ENCODE measurements at regions of chr4 and their contacts with region 1.

Region 1: DNA sequence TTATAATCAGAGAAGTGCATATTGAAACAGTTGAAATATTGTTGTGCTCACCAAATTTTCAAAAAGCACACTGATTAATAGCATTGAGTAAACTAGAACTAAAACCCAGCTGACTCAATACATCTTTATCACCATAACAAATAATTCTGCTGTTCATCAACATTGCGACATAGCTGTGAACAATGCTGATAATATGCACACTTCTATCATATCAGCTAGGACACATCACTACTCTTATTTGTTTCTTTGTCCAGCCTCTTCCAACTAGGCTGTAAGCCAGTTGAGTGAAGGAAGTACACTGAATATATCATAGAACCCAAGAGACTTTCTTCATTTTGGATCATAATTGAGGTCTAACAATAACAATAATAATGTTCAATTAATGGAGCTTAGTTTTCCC is 349.7 kb downstream of the IQCM start:
- DNase-seq: no peak
- H3K4me3 ChIP-seq: no peak overlapping the region
- H3K27ac ChIP-seq: no peak overlapping the region
- H3K4me1 ChIP-seq: no peaks in the 10 kb centered on the region
- H3K27me3 ChIP-seq: no peaks in the 10 kb centered on the region
- CTCF ChIP-seq: no peak

Region 2: DNA sequence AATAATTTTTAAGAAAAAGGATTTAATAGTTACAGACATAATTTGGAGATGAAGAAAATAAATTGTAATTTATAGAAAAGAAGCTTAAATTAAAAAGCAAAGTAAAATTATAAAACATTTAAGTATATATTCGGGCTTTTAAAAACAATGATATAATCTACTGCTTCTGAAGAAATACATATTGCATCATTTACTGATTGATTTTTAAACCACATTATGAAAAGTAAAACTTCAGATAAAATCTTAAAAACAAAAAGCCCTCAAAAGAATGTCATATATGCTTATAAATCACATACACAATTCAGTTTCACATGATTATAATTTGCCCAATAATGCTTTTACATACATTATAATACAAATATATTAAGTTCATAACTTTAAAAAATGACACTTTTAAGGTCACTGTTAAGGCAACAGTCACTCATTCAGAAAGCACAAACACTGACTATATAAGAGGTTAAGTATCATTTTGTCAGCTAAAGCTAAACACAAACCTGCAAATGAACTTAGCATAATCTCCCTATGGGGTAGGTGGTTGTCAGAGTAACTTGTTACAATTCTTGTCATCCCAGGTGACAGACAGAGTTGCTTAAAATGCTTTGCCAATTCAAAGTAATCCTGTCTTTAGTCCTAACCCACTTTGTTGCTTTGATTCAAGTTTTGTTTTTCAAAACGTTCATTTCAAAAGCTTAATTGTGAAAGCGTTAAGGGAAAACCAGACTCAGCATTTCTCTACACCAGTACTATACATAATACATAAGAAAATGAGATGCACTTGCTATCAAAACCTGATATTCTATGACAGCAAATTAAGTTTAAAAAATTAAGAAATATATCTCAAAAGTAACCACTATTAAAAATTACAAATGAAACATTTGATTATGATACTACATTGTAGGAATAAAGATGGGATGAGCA is 1025.4 kb after region 1 on chr4:
- CTCF ChIA-PET with region 1: no interaction called
- POLR2A ChIA-PET with region 1: interaction called, 11 read pairs
- intact Hi-C with region 1: no loop called
- DNase-seq: no peak
- H3K4me3 ChIP-seq: no peak overlapping the region
- H3K27ac ChIP-seq: no peak overlapping the region
- H3K4me1 ChIP-seq: no peaks in the 10 kb centered on the region
- H3K27me3 ChIP-seq: no peaks in the 10 kb centered on the region
- CTCF ChIP-seq: no peak